Dendritic cell treated with granulocyte-macrophage colony-stimulating factor and Interleukin-4, amounts not matched to agents 40 ng/mL and 50 ng/mL, for 4 days (primary cell): ENCODE measurements at regions of chr10 and their contacts with region 1.

Region 1: GRCh38 chr10:115706026-115706781 is 566.8 kb downstream of the GFRA1 start:
- H3K4me3 Mint-ChIP-seq: no peak overlapping the region
- H3K27ac Mint-ChIP-seq: no peak overlapping the region
- H3K4me1 Mint-ChIP-seq: no peaks in the 10 kb centered on the region
- H3K27me3 Mint-ChIP-seq: no peaks in the 10 kb centered on the region

Region 2: DNA sequence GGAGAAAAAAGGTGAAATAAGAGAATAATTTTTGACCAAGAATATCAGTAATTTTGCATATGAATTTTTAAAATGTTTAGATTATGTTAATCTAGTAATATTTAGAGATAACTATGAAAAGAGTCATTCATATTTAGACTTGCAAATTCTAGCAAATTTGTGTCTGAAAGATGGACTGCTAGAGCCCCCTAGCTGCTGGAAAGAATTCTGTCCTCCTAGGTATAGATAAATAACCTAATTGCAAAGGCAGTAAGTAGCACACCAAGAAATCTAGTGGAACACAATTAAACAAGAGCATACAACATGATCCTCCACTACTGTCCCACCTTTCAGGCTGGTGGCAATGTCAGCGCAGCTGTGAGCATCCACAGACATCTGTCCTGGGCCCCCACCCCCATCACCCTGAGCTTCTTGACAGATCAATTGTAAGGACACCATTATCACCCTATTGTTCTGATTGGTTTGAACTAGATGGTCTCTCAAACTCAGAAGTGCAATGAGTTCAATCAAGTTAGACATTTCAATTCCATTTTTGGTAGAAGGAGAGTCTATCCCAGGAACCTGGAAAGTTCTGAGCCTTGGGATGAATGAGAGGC is 581.8 kb after region 1 on chr10:
- intact Hi-C with region 1: loop called (anchors 5 kb)
- H3K4me3 Mint-ChIP-seq: no peak overlapping the region
- H3K27ac Mint-ChIP-seq: no peak overlapping the region
- H3K4me1 Mint-ChIP-seq: no peaks in the 10 kb centered on the region
- H3K27me3 Mint-ChIP-seq: peaks cover 11% of the 10 kb centered on the region